H1 (cell line): ENCODE measurements at regions of chr10 and their contacts with region 1.

Region 1: GRCh38 chr10:80599424-80599847 is 61.7 kb downstream of the SH2D4B start:
- DNase-seq: peak; percentile 68 to 79
- H3K4me3 ChIP-seq: no peak overlapping the region
- H3K27ac ChIP-seq: no peak overlapping the region
- H3K4me1 ChIP-seq: no peaks in the 10 kb centered on the region; a peak in 1 of 7 replicates
- H3K27me3 ChIP-seq: no peaks in the 10 kb centered on the region; a peak in 1 of 7 replicates
- CTCF ChIP-seq: peak; percentile 87 to 98 (median 87)
- EP300 ChIP-seq: no peak
- POLR2A ChIP-seq: no peak
- RAD21 ChIP-seq: peak; percentile 78 to 85

Region 2: GRCh38 chr10:80444646-80445319 is 154.7 kb before region 1 on chr10:
- CTCF ChIA-PET with region 1: interaction called, 24 read pairs
- POLR2A ChIA-PET with region 1: no interaction called
- DNase-seq: peak in 1 of 2 experiments; percentile 58
- H3K4me3 ChIP-seq: no peak overlapping the region
- H3K27ac ChIP-seq: no peak overlapping the region
- H3K4me1 ChIP-seq: peaks cover 0 to 3% (median 0%) of the 10 kb centered on the region in 4 experiments; a peak in 1 of 7 replicates
- H3K27me3 ChIP-seq: no peaks in the 10 kb centered on the region
- CTCF ChIP-seq: peak; percentile 78 to 95 (median 87)
- EP300 ChIP-seq: no peak
- POLR2A ChIP-seq: no peak
- RAD21 ChIP-seq: peak; percentile 98

Region 3: GRCh38 chr10:80535671-80536365 is 63.6 kb before region 1 on chr10:
- CTCF ChIA-PET with region 1: interaction called, 18 read pairs
- POLR2A ChIA-PET with region 1: no interaction called
- DNase-seq: peak; percentile 29 to 78
- H3K4me3 ChIP-seq: peak overlapping the region; percentile 24 to 42 (median 28); a peak in 4 of 8 replicates
- H3K27ac ChIP-seq: no peak overlapping the region
- H3K4me1 ChIP-seq: no peaks in the 10 kb centered on the region; a peak in 1 of 7 replicates
- H3K27me3 ChIP-seq: peaks cover 0 to 1% (median 0%) of the 10 kb centered on the region in 4 experiments; a peak in 1 of 7 replicates
- CTCF ChIP-seq: peak; percentile 40 to 54 (median 49)
- EP300 ChIP-seq: no peak
- POLR2A ChIP-seq: no peak
- RAD21 ChIP-seq: peak; percentile 41 to 63; a peak in 3 of 4 replicates

Region 4: GRCh38 chr10:80567291-80567690 is 32.1 kb before region 1 on chr10:
- CTCF ChIA-PET with region 1: interaction called, 11 read pairs
- POLR2A ChIA-PET with region 1: no interaction called
- DNase-seq: peak in 1 of 2 experiments; percentile 28
- H3K4me3 ChIP-seq: no peak overlapping the region
- H3K27ac ChIP-seq: no peak overlapping the region
- H3K4me1 ChIP-seq: no peaks in the 10 kb centered on the region
- H3K27me3 ChIP-seq: no peaks in the 10 kb centered on the region
- CTCF ChIP-seq: peak in 1 of 3 experiments; percentile 12; a peak in 1 of 4 replicates
- EP300 ChIP-seq: no peak
- POLR2A ChIP-seq: no peak
- RAD21 ChIP-seq: no peak

Region 5: GRCh38 chr10:80622153-80622552 is 22.7 kb after region 1 on chr10:
- CTCF ChIA-PET with region 1: interaction called, 158 read pairs
- POLR2A ChIA-PET with region 1: no interaction called
- DNase-seq: no peak
- H3K4me3 ChIP-seq: no peak overlapping the region
- H3K27ac ChIP-seq: no peak overlapping the region
- H3K4me1 ChIP-seq: no peaks in the 10 kb centered on the region
- H3K27me3 ChIP-seq: no peaks in the 10 kb centered on the region
- CTCF ChIP-seq: no peak
- EP300 ChIP-seq: no peak
- POLR2A ChIP-seq: no peak
- RAD21 ChIP-seq: no peak

Region 6: DNA sequence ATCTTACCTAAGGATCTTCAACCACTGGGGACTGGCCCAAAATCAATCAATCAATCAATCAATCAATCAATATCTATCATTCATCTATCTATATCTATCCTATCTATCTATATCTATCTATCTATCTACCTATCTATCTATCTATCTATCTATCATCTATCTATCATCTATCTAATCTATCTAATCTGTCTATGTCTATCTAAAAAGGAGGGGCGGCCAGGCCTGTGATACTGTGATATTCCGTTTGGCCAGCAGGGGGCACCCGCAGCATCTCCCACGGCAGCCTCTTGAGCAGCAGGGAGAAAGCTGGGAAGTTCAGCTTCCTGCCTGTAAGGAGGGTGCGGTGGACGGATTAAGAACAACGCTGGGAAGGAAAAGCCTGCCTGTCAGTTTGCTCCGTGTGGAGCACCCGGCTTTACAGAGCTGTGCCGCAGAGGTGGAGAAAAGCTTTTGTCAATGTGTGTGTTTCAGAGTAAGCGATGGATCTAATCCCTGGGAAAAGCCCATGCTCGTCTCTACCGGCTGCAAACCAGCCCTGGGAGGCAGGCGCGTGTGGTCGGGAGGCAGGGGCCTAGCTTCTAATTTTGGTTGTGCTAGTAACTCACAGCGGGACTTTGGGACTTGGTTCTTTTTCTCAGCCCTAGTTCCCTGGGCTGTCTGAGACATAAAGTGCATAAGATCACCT is 63.3 kb after region 1 on chr10:
- CTCF ChIA-PET with region 1: interaction called, 83 read pairs
- POLR2A ChIA-PET with region 1: no interaction called
- DNase-seq: peak; percentile 75 to 98
- H3K4me3 ChIP-seq: peak overlapping the region in 3 of 4 experiments; percentile 21 to 51 (median 43); a peak in 5 of 8 replicates
- H3K27ac ChIP-seq: no peak overlapping the region
- H3K4me1 ChIP-seq: peaks cover 0 to 4% (median 3%) of the 10 kb centered on the region in 4 experiments; a peak in 3 of 7 replicates
- H3K27me3 ChIP-seq: peaks cover 0 to 2% (median 0%) of the 10 kb centered on the region in 4 experiments; a peak in 2 of 7 replicates
- CTCF ChIP-seq: peak; percentile 83 to 88 (median 86)
- EP300 ChIP-seq: no peak
- POLR2A ChIP-seq: no peak
- RAD21 ChIP-seq: peak; percentile 79 to 82

Region 7: DNA sequence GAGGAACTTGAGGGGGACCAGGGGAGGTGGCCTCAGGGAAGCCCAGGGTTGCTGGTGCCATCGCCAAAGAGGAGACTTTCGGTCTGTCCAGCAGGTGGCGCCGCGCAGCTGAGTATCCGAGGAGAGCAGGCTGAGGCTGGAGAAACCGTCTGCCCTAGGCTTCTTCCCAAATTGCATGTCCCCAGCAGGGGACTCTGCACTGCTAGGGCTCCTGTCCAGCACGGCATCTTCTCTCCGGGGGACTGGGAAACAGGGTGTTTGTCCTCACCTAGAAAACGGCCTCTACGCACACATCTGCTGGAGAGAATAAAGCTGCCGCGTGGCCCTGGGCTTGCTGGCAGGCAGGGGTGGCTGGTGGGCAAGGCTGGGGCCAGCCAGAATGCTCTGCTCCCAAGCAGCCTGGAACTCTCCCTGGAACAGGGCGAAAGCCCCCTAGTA is 100.2 kb after region 1 on chr10:
- CTCF ChIA-PET with region 1: interaction called, 24 read pairs
- POLR2A ChIA-PET with region 1: no interaction called
- DNase-seq: peak; percentile 73 to 96
- H3K4me3 ChIP-seq: no peak overlapping the region
- H3K27ac ChIP-seq: no peak overlapping the region
- H3K4me1 ChIP-seq: no peaks in the 10 kb centered on the region; a peak in 1 of 7 replicates
- H3K27me3 ChIP-seq: no peaks in the 10 kb centered on the region
- CTCF ChIP-seq: peak; percentile 93 to 96 (median 94)
- EP300 ChIP-seq: no peak
- POLR2A ChIP-seq: no peak
- RAD21 ChIP-seq: peak; percentile 95 to 97

Region 8: DNA sequence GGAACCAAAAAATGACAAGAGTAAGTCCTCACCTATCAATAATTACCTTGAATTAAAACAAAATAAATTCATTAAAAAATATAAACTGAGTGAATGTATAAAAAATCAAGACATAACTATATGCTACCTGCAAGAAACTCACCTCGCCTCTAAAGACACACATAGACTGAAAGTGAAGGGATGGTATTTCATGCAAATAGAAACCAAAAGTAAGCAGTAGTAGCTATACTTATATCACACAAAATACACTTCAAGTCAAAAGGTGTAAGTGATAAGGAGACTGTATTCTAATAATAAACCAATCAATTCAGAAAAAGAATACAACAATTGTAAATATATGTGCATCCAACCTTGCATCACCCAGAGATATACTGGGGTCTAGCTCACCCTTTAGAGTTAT is 270.8 kb after region 1 on chr10:
- CTCF ChIA-PET with region 1: no interaction called
- POLR2A ChIA-PET with region 1: no interaction called
- DNase-seq: no peak
- H3K4me3 ChIP-seq: no peak overlapping the region
- H3K27ac ChIP-seq: no peak overlapping the region
- H3K4me1 ChIP-seq: no peaks in the 10 kb centered on the region
- H3K27me3 ChIP-seq: no peaks in the 10 kb centered on the region
- CTCF ChIP-seq: no peak
- EP300 ChIP-seq: no peak
- POLR2A ChIP-seq: no peak
- RAD21 ChIP-seq: no peak